AG04449 (cell line): ENCODE measurements at regions of chr12 and their contacts with region 1.

Region 1: DNA sequence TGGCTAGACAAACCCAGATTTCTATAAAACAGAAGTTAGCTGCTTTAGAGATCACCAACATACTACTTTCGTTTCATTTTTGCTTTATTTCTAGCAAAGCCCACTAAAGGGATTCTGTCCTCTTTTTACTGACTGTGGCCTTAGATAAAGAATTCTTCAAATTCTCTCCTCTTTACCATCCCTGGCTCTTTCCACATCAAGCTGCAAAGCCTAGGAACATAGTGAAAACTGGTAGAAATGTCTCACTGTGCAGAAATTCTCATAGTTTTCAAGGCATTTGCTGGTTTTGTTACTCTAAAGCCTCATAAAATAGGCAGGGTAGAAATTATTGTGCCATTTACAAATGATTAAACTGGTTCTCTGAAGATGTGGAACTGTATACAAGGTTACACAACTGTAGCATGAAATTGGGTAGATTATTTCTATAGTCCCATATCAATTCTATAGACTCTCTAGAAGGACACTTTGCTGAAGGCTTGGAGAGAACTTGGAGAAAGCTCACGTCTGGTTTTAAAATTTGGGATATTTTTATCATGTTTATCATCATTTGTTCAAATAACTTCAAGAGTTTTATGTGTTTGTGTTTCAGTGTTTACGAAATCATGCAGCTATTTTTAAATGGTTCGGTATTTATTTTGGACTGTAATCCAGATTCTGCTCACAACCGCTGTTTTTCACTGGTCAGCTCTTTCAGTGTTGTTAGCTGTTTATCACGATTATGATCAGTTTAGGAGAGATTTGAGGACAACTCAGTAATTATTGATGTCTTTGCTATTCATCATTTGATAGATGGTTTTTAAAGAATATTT is 36.7 kb upstream of the CSRP2 start:
- DNase-seq: peak; percentile 16
- H3K4me3 ChIP-seq: no peak overlapping the region
- CTCF ChIP-seq: no peak

Region 2: DNA sequence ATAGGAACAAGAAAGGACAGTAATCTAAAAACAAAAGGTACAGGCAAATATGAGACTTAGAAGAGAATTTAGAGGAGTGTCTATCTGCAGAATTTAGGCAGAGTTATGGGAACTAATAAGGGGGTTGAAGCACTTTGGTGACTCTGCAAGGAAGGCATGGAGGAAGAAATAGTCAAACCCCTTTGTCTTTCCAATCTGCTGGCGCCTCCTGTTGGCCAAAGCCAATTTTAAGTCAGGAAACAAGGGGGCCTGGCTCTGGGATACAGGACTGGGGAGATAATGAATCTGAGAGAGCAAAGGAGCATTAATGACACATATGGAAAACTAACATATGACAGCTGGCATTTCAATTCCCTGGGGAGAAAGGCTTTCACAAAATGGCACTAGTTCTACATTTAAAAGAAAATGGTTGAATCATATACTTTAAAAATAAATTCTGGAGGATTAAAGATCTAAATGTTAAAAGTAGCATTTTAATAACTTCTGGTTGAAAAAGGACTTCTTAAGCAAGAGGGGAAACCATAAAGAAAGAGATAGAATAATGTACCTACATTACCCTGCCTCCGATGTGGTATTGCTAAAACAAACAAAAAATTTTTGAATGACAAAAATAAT is 11.7 kb after region 1 on chr12:
- CTCF ChIA-PET with region 1: interaction called, 11 read pairs
- POLR2A ChIA-PET with region 1: no interaction called
- DNase-seq: no peak
- H3K4me3 ChIP-seq: no peak overlapping the region
- CTCF ChIP-seq: peak; percentile 57

Region 3: GRCh38 chr12:76952995-76953394 is 37.4 kb after region 1 on chr12:
- CTCF ChIA-PET with region 1: no interaction called
- POLR2A ChIA-PET with region 1: no interaction called
- DNase-seq: no peak
- H3K4me3 ChIP-seq: no peak overlapping the region
- CTCF ChIP-seq: no peak

Region 4: DNA sequence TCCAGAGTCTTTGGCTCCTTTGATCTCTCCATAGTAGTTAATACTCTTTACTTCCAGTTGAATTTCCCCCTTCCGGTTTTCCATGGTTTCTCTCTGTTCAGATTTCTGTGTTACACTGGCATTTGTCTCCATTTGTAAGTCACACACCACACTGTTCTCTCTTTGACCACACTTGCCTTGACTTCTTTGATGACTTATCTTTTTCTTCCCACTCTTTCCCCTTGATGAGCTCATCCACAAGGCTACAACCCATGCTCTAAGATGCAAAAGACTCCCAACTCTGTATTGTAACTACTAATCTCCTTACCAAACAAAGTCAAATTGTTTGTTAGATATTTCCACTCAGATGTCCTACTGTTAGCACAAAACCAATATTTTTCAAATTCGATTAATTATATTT is 392.5 kb after region 1 on chr12:
- CTCF ChIA-PET with region 1: no interaction called
- POLR2A ChIA-PET with region 1: no interaction called
- DNase-seq: no peak
- H3K4me3 ChIP-seq: no peak overlapping the region
- CTCF ChIP-seq: no peak